ENCODE measurements at regions of chr21 and their contacts with region 1.

Region 1: DNA sequence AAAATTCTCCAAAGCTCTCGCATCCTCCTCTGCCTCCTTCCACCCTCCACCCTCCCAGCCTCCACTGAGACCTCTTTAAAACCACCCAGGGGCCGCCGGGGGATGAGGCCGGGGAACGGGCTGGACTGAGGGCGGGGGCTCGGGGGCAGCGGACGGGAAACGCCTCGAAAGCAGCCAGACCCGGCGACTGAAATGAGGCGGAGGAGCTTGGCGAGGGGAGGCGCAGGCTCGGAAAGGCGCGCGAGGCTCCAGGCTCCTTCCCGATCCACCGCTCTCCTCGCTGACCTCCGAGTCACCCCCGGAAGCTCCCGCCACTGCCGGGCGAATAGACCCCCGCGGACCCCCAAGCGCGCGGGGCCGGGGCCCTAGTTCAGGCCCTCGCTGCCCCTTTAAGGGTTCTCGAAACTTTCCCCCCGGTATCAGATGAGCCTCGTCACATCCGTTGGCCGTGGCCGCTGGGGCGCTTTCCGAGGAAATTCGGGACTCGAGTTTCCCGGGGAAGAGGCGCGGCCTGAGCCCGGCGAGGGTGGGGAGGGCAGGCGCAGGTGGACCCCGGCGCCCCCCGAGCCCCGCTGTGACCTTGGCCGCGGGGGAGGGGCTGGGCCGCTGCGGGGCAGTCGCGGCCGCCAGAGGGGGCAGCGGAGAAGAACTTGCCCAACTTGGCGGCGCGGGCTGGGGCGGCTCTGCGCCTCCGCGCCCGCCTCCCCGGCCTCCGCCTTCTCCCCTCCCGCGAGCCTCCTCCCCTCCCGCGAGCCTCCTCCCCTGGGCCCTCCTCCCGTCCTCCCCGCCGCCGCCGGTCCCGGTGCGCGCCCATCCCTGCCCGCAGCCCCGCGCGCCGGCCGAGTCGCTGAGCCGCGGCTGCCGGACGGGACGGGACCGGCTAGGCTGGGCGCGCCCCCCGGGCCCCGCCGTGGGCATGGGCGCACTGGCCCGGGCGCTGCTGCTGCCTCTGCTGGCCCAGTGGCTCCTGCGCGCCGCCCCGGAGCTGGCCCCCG is at the start of gene BACE2:
- DNase-seq: peak; percentile 85 to 87
- ATAC-seq: peak; percentile 77 to 91 (median 88)
- H3K4me3 ChIP-seq: peak within 1 kb of the TSS; percentile 69 to 90 (median 87)
- H3K27ac ChIP-seq: peak within 1 kb of the TSS; percentile 84 to 97 (median 94)
- H3K4me1 ChIP-seq: peaks cover 0 to 41% (median 29%) of the 10 kb centered on the region in 9 donors
- H3K27me3 ChIP-seq: peaks cover 0 to 40% (median 0%) of the 10 kb centered on the region in 7 donors
- CTCF ChIP-seq: peak; percentile 23 to 86 (median 66)
- total RNA-seq, gene BACE2: 11.2 to 36.5 (median 15.1) TPM

Region 2: GRCh38 chr21:41090981-41091380 is 76.7 kb before region 1 on chr21:
- intact Hi-C with region 1: no loop called
- DNase-seq: no peak
- ATAC-seq: peak in 1 of 8 donors; percentile 25
- H3K4me3 ChIP-seq: no peak overlapping the region
- H3K27ac ChIP-seq: no peak overlapping the region
- H3K4me1 ChIP-seq: peaks cover 0 to under 1% (median 0%) of the 10 kb centered on the region in 9 donors
- H3K27me3 ChIP-seq: peaks cover 0 to 15% (median 0%) of the 10 kb centered on the region in 7 donors
- CTCF ChIP-seq: no peak

Region 3: GRCh38 chr21:41235201-41235985 is 67.7 kb after region 1 on chr21:
- intact Hi-C with region 1: loop called in 1 of 10 experiments (anchors 10 kb)
- DNase-seq: no peak
- ATAC-seq: no peak
- H3K4me3 ChIP-seq: no peak overlapping the region
- H3K27ac ChIP-seq: no peak overlapping the region
- H3K4me1 ChIP-seq: no peaks in the 10 kb centered on the region
- H3K27me3 ChIP-seq: no peaks in the 10 kb centered on the region
- CTCF ChIP-seq: no peak

Region 4: DNA sequence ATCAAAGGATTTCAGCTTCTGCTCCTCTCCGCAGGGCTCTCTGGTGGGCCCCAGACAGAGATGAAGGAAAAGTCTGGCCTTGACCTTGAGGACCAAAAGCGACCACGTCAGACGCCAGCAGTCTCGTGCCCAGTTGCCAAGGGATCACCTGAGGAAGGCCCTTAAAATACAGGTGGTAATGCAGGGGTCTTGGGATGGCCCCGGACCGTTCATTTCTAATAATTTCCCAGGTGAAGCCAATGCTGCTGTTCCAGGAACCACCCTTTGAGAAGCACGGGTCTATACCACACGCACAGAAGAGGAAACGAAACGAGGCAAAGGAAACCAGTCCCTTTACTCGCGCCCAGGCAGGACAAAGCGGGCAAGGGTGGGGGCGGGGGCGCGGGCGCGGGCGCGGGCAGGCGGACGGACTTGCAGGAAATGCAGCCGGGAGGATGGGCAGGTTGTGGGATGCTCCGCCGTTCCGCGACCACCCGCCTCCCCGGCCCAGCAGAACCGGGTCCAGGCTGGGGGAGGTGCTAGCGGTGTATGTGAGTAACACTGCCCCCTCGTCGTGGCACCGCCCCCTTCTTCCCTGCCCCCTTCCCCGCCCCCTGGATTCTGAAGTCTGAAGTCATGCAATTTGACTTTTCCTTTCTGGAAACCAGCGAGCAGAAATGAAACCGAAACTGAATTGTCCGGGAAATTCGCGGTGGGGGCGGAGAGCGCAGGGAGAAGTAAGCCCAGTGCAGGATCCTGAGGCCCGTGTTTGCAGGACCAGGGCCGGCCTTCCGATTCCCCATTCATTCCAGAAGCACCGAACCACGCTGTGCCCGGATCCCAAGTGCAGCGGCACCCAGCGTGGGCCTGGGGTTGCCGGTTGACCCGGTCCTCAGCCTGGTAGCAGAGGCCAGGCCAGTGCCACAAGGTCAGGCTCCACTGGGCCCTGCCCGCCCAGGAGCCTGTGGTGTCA is 252.5 kb after region 1 on chr21:
- intact Hi-C with region 1: loop called in 1 of 10 experiments (anchors 10 kb)
- DNase-seq: peak; percentile 80 to 93
- ATAC-seq: peak; percentile 91 to 97 (median 96)
- H3K4me3 ChIP-seq: peak overlapping the region; percentile 53 to 77 (median 68)
- H3K27ac ChIP-seq: peak overlapping the region; percentile 75 to 99 (median 91)
- H3K4me1 ChIP-seq: peaks cover 0 to 31% (median 16%) of the 10 kb centered on the region in 9 donors
- H3K27me3 ChIP-seq: no peaks in the 10 kb centered on the region
- CTCF ChIP-seq: no peak

Region 5: GRCh38 chr21:41521489-41522027 is 353.9 kb after region 1 on chr21:
- intact Hi-C with region 1: no loop called
- DNase-seq: no peak
- ATAC-seq: no peak
- H3K4me3 ChIP-seq: no peak overlapping the region
- H3K27ac ChIP-seq: no peak overlapping the region
- H3K4me1 ChIP-seq: no peaks in the 10 kb centered on the region
- H3K27me3 ChIP-seq: peaks cover 0 to 18% (median 10%) of the 10 kb centered on the region in 7 donors
- CTCF ChIP-seq: no peak